Transverse colon (tissue), 4 donors: ENCODE measurements at regions of chr3 and their contacts with region 1.

Region 1: GRCh38 chr3:78666470-78666800 is 1101.4 kb downstream of the ROBO1 start:
- DNase-seq: no peak
- H3K4me3 ChIP-seq: no peak overlapping the region
- H3K27ac ChIP-seq: no peak overlapping the region
- H3K4me1 ChIP-seq: no peaks in the 10 kb centered on the region
- H3K27me3 ChIP-seq: no peaks in the 10 kb centered on the region
- CTCF ChIP-seq: no peak
- EP300 ChIP-seq: no peak
- POLR2A ChIP-seq: no peak

Region 2: GRCh38 chr3:77541203-77541923 is 1125.1 kb before region 1 on chr3:
- in situ Hi-C with region 1: no loop called
- intact Hi-C with region 1: no loop called
- DNase-seq: no peak
- H3K4me3 ChIP-seq: no peak overlapping the region
- H3K27ac ChIP-seq: no peak overlapping the region
- H3K4me1 ChIP-seq: no peaks in the 10 kb centered on the region
- H3K27me3 ChIP-seq: no peaks in the 10 kb centered on the region
- CTCF ChIP-seq: no peak
- EP300 ChIP-seq: no peak
- POLR2A ChIP-seq: no peak

Region 3: DNA sequence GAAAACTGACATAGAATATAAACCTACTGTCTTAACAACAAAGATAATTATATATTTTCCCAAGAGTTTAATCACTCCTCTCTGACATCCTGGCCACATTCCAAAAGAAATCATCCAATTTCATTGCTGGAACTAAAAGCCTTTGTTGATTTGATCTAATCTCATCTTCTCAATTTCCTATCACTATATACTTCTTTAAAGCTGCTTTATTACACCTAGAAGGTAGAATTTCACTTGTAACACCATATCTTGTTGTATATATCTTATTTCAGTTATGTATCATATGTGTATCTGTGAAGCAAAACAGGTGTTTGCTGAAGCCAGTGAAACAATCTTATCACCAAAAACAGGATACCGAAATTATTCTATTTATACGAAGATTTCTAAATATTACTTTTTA is 361.2 kb after region 1 on chr3:
- in situ Hi-C with region 1: loop called (anchors 5 to 25 kb)
- intact Hi-C with region 1: no loop called
- DNase-seq: no peak
- H3K4me3 ChIP-seq: no peak overlapping the region
- H3K27ac ChIP-seq: no peak overlapping the region
- H3K4me1 ChIP-seq: no peaks in the 10 kb centered on the region
- H3K27me3 ChIP-seq: no peaks in the 10 kb centered on the region
- CTCF ChIP-seq: no peak
- EP300 ChIP-seq: no peak
- POLR2A ChIP-seq: no peak